GM10248 (cell line): ENCODE measurements at regions of chr13 and their contacts with region 1.

Region 1: GRCh38 chr13:42969558-42970172 is 22.4 kb downstream of the EPSTI1 start:
- DNase-seq: peak; percentile 72
- CTCF ChIP-seq: peak; percentile 80

Region 2: GRCh38 chr13:42865768-42866102 is 103.9 kb before region 1 on chr13:
- CTCF ChIA-PET with region 1: no interaction called
- POLR2A ChIA-PET with region 1: no interaction called
- DNase-seq: no peak
- CTCF ChIP-seq: no peak

Region 3: GRCh38 chr13:42985312-42986175 is 15.9 kb after region 1 on chr13:
- CTCF ChIA-PET with region 1: interaction called, 27 read pairs
- POLR2A ChIA-PET with region 1: no interaction called
- DNase-seq: no peak
- CTCF ChIP-seq: no peak

Region 4: GRCh38 chr13:43036351-43037250 is 66.9 kb after region 1 on chr13:
- CTCF ChIA-PET with region 1: interaction called, 10 read pairs
- POLR2A ChIA-PET with region 1: no interaction called
- DNase-seq: no peak
- CTCF ChIP-seq: no peak

Region 5: DNA sequence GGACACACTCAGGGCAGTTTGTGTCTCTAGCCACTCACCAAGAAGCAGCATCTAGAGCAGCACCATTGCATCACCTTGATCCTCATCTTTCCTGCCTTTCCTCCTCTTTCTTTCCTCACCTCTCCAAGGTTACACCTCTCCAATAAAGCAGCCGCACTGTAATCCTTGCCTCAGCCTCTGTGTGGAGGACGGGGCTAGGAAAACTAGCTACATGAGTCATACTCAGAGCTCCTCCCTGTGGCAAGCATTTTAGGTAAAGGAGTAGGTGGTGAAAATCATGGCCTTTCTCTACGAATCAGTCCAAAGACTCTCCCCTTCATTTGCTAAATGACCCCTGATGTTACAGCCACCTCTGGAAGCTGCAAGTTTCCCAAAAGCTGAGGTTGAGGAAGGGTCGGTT is 162.6 kb after region 1 on chr13:
- CTCF ChIA-PET with region 1: interaction called, 10 read pairs
- POLR2A ChIA-PET with region 1: no interaction called
- DNase-seq: peak; percentile 42
- CTCF ChIP-seq: peak; percentile 37

Region 6: DNA sequence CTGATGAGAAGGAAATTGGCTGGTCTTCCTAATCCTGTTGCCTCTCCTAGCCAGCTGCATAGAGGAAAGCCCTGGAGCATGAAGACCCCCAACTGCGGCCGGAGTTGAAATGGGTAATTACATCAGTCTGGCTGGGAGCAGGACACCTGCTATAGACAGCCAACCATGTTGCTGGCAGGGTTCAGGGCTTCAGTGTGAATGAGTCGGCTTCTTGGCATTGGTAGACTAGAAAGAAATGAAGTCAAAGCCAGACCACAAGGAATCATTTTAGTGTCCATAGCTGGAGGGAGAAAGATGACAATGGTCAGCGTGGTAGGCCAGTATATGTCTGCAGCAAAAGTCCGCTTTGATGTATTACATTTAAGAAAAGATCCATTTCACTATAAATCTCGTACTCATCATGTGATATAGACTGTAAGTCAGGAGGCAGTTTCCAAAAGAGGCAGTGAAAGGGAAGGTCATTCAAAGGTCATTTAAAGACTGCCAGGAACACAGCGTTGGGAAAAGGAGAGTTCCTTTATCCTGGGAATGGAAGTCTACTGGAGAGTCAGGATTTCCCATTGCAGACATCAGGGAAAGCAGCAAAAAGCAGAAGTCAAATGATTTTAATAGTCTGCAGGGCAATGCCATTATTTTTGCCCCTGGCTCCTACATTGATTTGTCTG is 316.4 kb after region 1 on chr13:
- CTCF ChIA-PET with region 1: no interaction called
- POLR2A ChIA-PET with region 1: no interaction called
- DNase-seq: no peak
- CTCF ChIP-seq: no peak